ENCODE measurements at regions of chr15 and their contacts with region 1.

Region 1: GRCh38 chr15:70815644-70816043 is 38.3 kb downstream of the LARP6 start:
- DNase-seq: no peak
- H3K4me3 Mint-ChIP-seq: no peak overlapping the region
- H3K27ac Mint-ChIP-seq: no peak overlapping the region
- H3K4me1 Mint-ChIP-seq: peaks cover 5% of the 10 kb centered on the region
- H3K27me3 Mint-ChIP-seq: no peaks in the 10 kb centered on the region
- CTCF ChIP-seq: no peak

Region 2: GRCh38 chr15:70569091-70569621 is 246.5 kb before region 1 on chr15:
- CTCF ChIA-PET with region 1: interaction called, 14 read pairs
- POLR2A ChIA-PET with region 1: no interaction called
- intact Hi-C with region 1: loop called (anchors 5 kb)
- DNase-seq: peak; percentile 91
- H3K4me3 Mint-ChIP-seq: no peak overlapping the region
- H3K27ac Mint-ChIP-seq: no peak overlapping the region
- H3K4me1 Mint-ChIP-seq: peaks cover 16% of the 10 kb centered on the region
- H3K27me3 Mint-ChIP-seq: no peaks in the 10 kb centered on the region
- CTCF ChIP-seq: peak; percentile 52

Region 3: DNA sequence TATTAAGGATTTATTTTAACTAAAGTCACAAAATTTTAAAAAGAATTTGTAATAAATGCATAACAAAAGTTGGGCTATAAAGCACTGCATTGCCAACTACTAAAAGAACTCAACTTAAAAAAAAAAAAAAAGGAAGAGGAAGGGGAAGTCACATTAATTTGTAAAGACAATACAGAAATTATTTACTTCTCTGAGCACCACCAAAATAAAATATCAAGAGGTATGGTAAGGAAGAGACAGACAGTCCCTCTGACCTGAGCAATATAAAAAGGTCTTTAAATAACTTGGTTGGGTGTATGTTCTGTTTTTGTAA is 135.8 kb before region 1 on chr15:
- CTCF ChIA-PET with region 1: interaction called, 93 read pairs
- POLR2A ChIA-PET with region 1: no interaction called
- intact Hi-C with region 1: loop called (anchors 1 kb)
- DNase-seq: no peak
- H3K4me3 Mint-ChIP-seq: no peak overlapping the region
- H3K27ac Mint-ChIP-seq: peak overlapping the region; percentile 58
- H3K4me1 Mint-ChIP-seq: no peaks in the 10 kb centered on the region
- H3K27me3 Mint-ChIP-seq: no peaks in the 10 kb centered on the region
- CTCF ChIP-seq: no peak

Region 4: GRCh38 chr15:70754862-70755261 is 60.8 kb before region 1 on chr15:
- CTCF ChIA-PET with region 1: interaction called, 19 read pairs
- POLR2A ChIA-PET with region 1: interaction called, 4 read pairs
- intact Hi-C with region 1: no loop called
- DNase-seq: no peak
- H3K4me3 Mint-ChIP-seq: no peak overlapping the region
- H3K27ac Mint-ChIP-seq: peak overlapping the region; percentile 25
- H3K4me1 Mint-ChIP-seq: peaks cover 12% of the 10 kb centered on the region
- H3K27me3 Mint-ChIP-seq: no peaks in the 10 kb centered on the region
- CTCF ChIP-seq: no peak

Region 5: DNA sequence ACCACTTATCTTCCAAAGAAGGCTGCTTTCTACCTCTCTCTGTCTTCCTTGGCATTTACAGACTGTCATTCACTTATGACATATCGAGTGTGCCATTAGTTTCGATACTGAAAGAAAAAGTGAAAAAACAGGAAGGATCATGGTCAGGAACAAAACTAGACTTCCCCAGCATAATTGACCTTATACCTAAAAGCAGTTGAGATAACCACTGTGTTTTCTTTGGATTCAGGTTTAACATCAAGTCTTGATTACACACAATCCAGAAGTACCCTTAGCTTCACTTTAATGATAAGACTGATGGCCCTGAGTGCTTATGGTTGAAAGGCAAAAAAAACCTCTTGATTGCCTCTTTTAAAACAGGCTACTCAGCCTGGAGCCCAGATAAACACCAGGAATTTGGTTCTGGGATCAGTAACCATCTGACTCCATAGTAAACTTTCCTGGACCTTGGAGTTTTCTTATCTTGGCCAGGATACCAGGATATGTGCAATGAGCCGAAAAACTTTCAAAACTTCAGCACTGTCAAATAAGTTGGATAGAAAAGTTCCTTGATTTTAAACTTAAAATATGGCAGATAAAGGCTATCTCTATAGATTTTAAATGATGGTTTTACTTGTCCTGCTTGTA is 47.3 kb before region 1 on chr15:
- CTCF ChIA-PET with region 1: interaction called, 13 read pairs
- POLR2A ChIA-PET with region 1: interaction called, 5 read pairs
- intact Hi-C with region 1: no loop called
- DNase-seq: no peak
- H3K4me3 Mint-ChIP-seq: no peak overlapping the region
- H3K27ac Mint-ChIP-seq: no peak overlapping the region
- H3K4me1 Mint-ChIP-seq: peaks cover 28% of the 10 kb centered on the region
- H3K27me3 Mint-ChIP-seq: no peaks in the 10 kb centered on the region
- CTCF ChIP-seq: no peak

Region 6: GRCh38 chr15:70826634-70827033 is 11.0 kb after region 1 on chr15:
- CTCF ChIA-PET with region 1: interaction called, 13 read pairs
- POLR2A ChIA-PET with region 1: no interaction called
- intact Hi-C with region 1: no loop called
- DNase-seq: peak; percentile 85
- H3K4me3 Mint-ChIP-seq: no peak overlapping the region
- H3K27ac Mint-ChIP-seq: peak overlapping the region; percentile 89
- H3K4me1 Mint-ChIP-seq: peaks cover 16% of the 10 kb centered on the region
- H3K27me3 Mint-ChIP-seq: no peaks in the 10 kb centered on the region
- CTCF ChIP-seq: no peak

Measured in MCF 10A (cell line).